Activated CD4-positive, alpha-beta memory T cell treated with anti-CD3 and anti-CD28 coated beads for 36 hours (primary cell): ENCODE measurements at regions of chr12 and their contacts with region 1.

Region 1: DNA sequence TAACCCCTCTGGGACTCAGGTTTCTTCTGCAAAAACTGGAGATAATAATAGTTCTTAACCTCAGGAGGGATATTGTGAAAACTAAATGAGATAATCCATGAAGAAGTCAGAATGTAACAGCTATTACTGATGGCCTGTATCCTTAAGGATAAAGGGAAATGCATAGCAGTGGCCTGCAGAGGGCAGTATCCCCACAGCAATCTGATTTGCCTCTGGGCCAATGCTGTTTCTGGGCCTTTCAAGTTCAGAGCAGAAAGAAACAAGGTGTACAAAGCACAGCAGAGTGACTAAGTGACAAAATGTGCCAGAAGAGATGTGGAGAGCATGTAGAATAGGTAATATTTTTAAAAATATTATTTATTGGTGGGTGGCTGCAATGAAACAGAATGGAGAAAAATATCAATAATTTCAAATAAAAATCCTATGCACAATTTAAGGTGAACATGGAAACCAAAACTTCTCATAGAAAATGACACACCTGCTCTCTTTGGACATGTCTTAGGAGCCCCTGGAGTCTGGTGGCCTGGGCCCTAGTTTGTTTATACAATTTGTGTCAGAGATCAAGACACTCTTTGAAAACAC is 90.3 kb downstream of the C12orf75 start:
- DNase-seq: peak; percentile 75
- H3K4me3 Mint-ChIP-seq: no peak overlapping the region
- H3K27ac Mint-ChIP-seq: no peak overlapping the region
- H3K4me1 Mint-ChIP-seq: peaks cover 6% of the 10 kb centered on the region
- H3K27me3 Mint-ChIP-seq: no peaks in the 10 kb centered on the region

Region 2: DNA sequence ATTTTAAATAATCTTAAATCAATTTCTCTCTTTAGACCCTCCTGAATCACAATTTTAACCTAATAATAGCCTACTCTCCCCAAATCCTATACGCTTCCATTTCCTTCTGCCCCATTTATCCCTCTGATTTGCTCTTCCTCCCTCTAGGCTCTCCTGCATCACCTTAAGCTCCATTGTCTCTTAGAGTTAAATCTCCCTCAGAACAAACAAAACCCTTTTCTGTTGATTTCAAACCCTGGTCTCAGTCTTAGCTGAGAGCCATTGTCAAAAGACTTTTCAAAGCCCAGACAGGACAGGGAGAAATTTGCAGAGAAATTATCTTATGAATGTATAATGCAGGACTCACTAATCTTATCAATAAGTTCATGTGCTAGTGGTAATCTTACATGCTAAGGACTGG is 15.9 kb after region 1 on chr12:
- CTCF ChIA-PET with region 1: no interaction called
- POLR2A ChIA-PET with region 1: no interaction called
- intact Hi-C with region 1: no loop called
- DNase-seq: no peak
- H3K4me3 Mint-ChIP-seq: no peak overlapping the region
- H3K27ac Mint-ChIP-seq: no peak overlapping the region
- H3K4me1 Mint-ChIP-seq: no peaks in the 10 kb centered on the region
- H3K27me3 Mint-ChIP-seq: peaks cover 24% of the 10 kb centered on the region

Region 3: GRCh38 chr12:105580821-105581352 is 160.1 kb after region 1 on chr12:
- CTCF ChIA-PET with region 1: no interaction called
- POLR2A ChIA-PET with region 1: no interaction called
- intact Hi-C with region 1: no loop called
- DNase-seq: no peak
- H3K4me3 Mint-ChIP-seq: no peak overlapping the region
- H3K27ac Mint-ChIP-seq: no peak overlapping the region
- H3K4me1 Mint-ChIP-seq: no peaks in the 10 kb centered on the region
- H3K27me3 Mint-ChIP-seq: peaks cover 8% of the 10 kb centered on the region

Region 4: DNA sequence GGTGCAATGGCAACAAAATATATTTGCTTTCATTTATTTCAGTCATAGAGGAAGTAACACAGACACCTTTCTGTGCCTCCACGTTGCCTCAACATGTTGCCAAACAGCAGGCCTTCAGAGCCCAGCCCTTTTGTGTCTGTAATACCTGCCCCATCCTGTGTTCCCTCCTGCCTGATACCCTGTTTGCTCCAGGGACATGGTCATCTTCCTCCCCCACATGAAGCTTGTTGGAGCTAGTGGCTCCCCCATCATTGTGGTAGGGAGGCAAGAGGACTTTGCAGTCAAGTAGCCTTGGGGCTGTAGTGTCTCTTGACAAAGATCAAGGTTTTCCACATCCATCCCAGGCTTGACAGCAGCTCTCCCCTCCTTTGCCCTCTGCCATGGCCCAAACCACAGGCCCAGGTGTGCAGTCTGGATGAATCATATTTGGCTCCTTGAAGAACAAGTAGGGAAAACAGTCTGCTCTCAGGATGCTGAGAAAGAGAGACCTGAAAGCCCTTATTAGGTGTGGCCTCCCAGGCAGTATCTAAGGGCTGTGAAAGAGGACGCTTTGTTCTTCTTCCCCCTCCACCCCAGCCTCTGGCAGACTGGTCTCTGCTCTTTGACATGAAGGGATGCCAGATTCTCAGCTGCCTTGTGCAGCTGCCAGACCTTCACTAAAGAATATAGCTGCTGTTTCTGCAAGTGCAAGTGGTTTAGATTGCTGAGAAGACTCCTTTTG is 238.8 kb after region 1 on chr12:
- CTCF ChIA-PET with region 1: no interaction called
- POLR2A ChIA-PET with region 1: no interaction called
- intact Hi-C with region 1: loop called (anchors 10 kb)
- DNase-seq: no peak
- H3K4me3 Mint-ChIP-seq: no peak overlapping the region
- H3K27ac Mint-ChIP-seq: no peak overlapping the region
- H3K4me1 Mint-ChIP-seq: no peaks in the 10 kb centered on the region
- H3K27me3 Mint-ChIP-seq: peaks cover 2% of the 10 kb centered on the region

Region 5: GRCh38 chr12:105876396-105876927 is 455.7 kb after region 1 on chr12:
- CTCF ChIA-PET with region 1: no interaction called
- POLR2A ChIA-PET with region 1: no interaction called
- intact Hi-C with region 1: no loop called
- DNase-seq: no peak
- H3K4me3 Mint-ChIP-seq: no peak overlapping the region
- H3K27ac Mint-ChIP-seq: no peak overlapping the region
- H3K4me1 Mint-ChIP-seq: no peaks in the 10 kb centered on the region
- H3K27me3 Mint-ChIP-seq: no peaks in the 10 kb centered on the region